ENCODE measurements at regions of chr12 and their contacts with region 1.

Region 1: DNA sequence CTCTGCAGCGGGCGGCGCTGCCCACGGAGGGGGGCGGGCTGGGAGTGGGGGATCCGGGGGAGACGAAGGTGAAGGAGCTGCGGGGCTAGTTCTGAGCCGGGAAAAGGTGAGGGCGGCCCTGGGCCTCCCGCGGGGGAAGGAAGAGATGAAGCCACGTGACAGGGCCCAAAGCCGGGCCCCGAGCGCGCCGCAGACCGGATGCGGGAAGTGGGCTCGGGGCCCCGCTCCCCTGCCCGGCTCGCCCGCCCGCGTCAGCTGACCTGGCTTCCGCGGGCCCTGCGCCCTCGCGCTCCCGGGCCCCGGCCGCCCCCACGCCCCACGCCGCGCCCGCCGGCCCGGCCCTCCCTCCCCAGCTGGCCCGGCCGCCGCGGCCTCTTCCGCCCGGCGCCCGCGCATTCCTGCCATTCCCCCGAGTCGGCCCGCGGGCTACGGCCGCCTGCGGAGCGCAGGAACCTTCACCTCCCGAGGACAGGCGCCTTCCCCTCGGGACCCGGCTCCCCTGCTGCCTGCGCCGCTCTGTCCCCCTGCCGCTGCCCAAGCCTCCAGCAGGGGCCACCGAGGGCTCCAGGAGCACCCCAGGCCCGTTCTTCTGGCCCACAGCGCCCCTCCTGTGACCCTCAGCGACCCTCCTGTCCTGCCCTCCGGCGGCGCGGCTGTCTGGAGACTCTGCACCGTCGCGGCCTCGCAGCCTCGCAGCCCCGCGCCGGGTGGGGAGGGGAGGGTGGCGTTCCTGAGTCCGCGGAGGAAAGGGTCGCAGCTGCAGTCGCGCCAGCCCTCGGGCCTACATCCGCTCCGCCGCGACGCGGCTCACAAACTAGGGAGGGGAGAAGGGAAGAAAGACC is 20.4 kb downstream of the NINJ2 start:
- H3K4me3 Mint-ChIP-seq: peak overlapping the region; percentile 73
- H3K27ac Mint-ChIP-seq: peak overlapping the region; percentile 90
- H3K4me1 Mint-ChIP-seq: peaks cover 80% of the 10 kb centered on the region
- H3K27me3 Mint-ChIP-seq: no peaks in the 10 kb centered on the region

Region 2: GRCh38 chr12:575948-576612 is 66.8 kb before region 1 on chr12:
- intact Hi-C with region 1: loop called (anchors 5 kb)
- H3K4me3 Mint-ChIP-seq: peak overlapping the region; percentile 66
- H3K27ac Mint-ChIP-seq: peak overlapping the region; percentile 85
- H3K4me1 Mint-ChIP-seq: peaks cover 33% of the 10 kb centered on the region
- H3K27me3 Mint-ChIP-seq: peaks cover 2% of the 10 kb centered on the region

Region 3: DNA sequence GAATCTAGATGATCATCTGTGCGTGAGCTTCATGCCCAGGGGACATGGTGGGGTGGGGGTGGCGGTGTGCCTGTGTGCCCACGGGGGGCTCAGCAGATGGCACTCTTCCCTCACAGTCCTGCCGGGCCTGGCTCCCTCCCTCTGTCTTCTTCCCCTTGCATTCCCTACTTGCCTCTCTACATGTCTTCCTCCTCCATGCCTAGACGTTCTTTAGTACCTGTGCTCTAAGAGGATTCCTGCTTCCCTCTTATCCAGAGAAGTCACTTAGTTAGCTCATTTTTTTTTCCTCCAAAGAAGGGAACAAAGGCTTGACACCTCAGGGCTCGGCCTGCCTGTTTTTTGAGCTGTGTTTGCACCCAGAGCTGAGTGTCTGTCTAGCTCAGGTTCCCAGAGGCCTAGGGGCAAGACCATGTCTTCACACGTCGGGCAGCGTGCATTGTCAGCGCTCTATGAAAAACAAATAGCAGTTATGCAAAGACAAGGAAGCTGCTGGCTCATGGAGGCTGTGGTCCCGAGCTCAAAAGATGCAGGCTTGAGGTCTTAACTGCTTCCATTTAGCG is 28.4 kb before region 1 on chr12:
- intact Hi-C with region 1: loop called (anchors 1 kb)
- H3K4me3 Mint-ChIP-seq: no peak overlapping the region
- H3K27ac Mint-ChIP-seq: peak overlapping the region; percentile 45
- H3K4me1 Mint-ChIP-seq: peaks cover 95% of the 10 kb centered on the region
- H3K27me3 Mint-ChIP-seq: no peaks in the 10 kb centered on the region

Region 4: GRCh38 chr12:823028-823698 is 180.3 kb after region 1 on chr12:
- intact Hi-C with region 1: no loop called
- H3K4me3 Mint-ChIP-seq: peak overlapping the region; percentile 33
- H3K27ac Mint-ChIP-seq: peak overlapping the region; percentile 81
- H3K4me1 Mint-ChIP-seq: peaks cover 45% of the 10 kb centered on the region
- H3K27me3 Mint-ChIP-seq: no peaks in the 10 kb centered on the region

Measured in dendritic cell treated with granulocyte-macrophage colony-stimulating factor and Interleukin-4, amounts not matched to agents 40 ng/mL and 50 ng/mL, for 4 days (primary cell).